Prostate gland (tissue), 2 donors: ENCODE measurements at regions of chr2 and their contacts with region 1.

Region 1: GRCh38 chr2:54634564-54635511 is 88.6 kb upstream of the EML6 start:
- DNase-seq: no peak
- H3K4me3 ChIP-seq: no peak overlapping the region
- H3K27ac ChIP-seq: peak overlapping the region; percentile 43 to 56
- H3K4me1 ChIP-seq: peaks cover 3% of the 10 kb centered on the region
- H3K27me3 ChIP-seq: no peaks in the 10 kb centered on the region
- CTCF ChIP-seq: no peak
- POLR2A ChIP-seq: no peak

Region 2: GRCh38 chr2:54455563-54456361 is 179.1 kb before region 1 on chr2 and contains the start of gene SPTBN1:
- intact Hi-C with region 1: loop called (anchors 10 kb)
- DNase-seq: peak; percentile 90
- H3K4me3 ChIP-seq: peak within 1 kb of the TSS; percentile 89 to 93
- H3K27ac ChIP-seq: peak within 1 kb of the TSS; percentile 94 to 96
- H3K4me1 ChIP-seq: peaks cover 9% of the 10 kb centered on the region
- H3K27me3 ChIP-seq: no peaks in the 10 kb centered on the region
- CTCF ChIP-seq: peak in 1 of 4 experiments; percentile 13
- POLR2A ChIP-seq: peak; percentile 41
- total RNA-seq, gene SPTBN1: 146 to 348 TPM

Region 3: DNA sequence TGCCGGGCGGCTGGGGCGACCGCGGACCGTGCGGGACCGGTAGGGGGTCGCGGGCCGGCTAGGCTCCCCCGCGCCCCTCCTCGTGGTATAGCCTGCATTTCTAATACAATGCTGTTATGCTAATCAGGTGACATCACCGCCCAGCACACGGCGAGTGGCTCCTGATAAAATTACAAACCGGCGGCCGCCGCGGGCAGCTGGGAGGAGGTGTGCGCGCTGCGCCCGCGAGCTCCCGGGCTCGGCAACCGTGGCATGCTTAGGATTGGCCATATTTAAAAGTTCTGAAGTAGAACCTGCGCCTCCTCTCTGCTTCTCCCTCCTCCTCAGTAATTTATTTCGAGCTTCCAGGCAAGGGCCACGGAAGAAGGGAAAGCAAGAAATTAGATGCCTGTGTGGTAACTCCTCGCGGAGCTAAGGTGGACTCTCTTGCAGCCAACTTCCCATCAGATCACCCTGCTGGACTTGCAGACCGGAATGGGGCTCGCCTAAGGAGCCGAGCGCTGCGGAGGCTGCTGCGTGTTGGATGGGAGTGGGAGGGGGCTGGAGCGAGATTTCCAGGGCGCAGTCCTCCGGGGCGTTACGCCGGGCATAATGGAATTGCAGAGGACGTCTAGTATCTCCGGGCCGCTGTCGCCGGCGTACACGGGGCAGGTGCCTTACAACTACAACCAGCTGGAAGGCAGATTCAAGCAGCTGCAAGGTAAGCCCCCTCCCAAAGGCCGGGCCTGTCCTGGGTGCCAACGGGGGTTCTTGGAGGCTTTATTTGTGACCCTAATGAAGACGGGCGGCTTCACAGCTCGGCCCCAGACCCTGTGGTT is 76.4 kb before region 1 on chr2:
- intact Hi-C with region 1: loop called (anchors 5 kb)
- DNase-seq: peak; percentile 67
- H3K4me3 ChIP-seq: peak overlapping the region; percentile 40 to 43
- H3K27ac ChIP-seq: peak overlapping the region; percentile 83 to 84
- H3K4me1 ChIP-seq: peaks cover 18% of the 10 kb centered on the region
- H3K27me3 ChIP-seq: no peaks in the 10 kb centered on the region
- CTCF ChIP-seq: no peak
- POLR2A ChIP-seq: peak; percentile 71

Region 4: DNA sequence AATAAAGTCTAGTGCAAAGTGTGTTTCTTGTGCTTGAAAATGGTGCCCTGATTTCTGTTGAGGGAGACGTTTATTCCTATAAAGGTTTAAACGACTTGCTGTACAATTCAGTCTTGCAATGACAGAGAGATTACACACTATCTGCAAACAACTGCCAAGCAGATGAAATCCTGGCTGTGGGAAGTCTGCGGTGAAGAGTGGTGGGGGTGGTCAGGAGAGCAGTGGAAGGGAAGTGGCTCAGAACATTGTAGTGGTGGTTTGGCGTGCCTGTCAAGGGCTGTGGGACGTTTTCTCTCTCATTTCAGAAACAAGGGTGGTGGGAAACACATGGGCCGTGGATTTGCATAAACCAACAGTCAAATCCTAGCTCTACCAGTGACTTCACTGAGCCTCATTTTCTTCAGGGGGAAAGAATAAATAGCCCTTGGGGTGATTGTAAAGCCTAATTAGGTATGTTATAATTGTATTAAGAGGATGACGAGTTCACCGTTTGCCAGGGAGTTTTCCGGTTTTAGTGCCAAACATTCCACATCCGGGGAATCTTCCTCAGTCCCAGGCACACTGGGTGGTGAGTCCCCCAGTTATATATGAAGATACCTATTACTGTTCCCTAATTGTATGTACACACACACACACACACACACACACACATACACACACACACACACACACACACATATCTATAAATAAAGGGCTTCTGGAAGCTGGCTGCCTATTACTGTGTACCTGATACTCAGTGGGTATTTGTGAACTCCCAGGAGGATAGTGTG is 63.7 kb before region 1 on chr2:
- intact Hi-C with region 1: no loop called
- DNase-seq: no peak
- H3K4me3 ChIP-seq: no peak overlapping the region
- H3K27ac ChIP-seq: no peak overlapping the region
- H3K4me1 ChIP-seq: peaks cover 19% of the 10 kb centered on the region
- H3K27me3 ChIP-seq: no peaks in the 10 kb centered on the region
- CTCF ChIP-seq: no peak
- POLR2A ChIP-seq: no peak

Region 5: GRCh38 chr2:54673501-54673998 is 38.7 kb after region 1 on chr2:
- intact Hi-C with region 1: loop called (anchors 5 kb)
- DNase-seq: peak; percentile 77
- H3K4me3 ChIP-seq: no peak overlapping the region
- H3K27ac ChIP-seq: peak overlapping the region; percentile 82
- H3K4me1 ChIP-seq: peaks cover 18% of the 10 kb centered on the region
- H3K27me3 ChIP-seq: no peaks in the 10 kb centered on the region
- CTCF ChIP-seq: peak in 1 of 4 experiments; percentile 4
- POLR2A ChIP-seq: no peak